ENCODE measurements at regions of chr14 and their contacts with region 1.

Region 1: GRCh38 chr14:87745507-87746118 is 247.4 kb downstream of the GALC start:
- DNase-seq: no peak
- H3K4me3 Mint-ChIP-seq: no peak overlapping the region
- H3K27ac Mint-ChIP-seq: no peak overlapping the region
- H3K4me1 Mint-ChIP-seq: no peaks in the 10 kb centered on the region
- H3K27me3 Mint-ChIP-seq: peaks cover 2% of the 10 kb centered on the region

Region 2: DNA sequence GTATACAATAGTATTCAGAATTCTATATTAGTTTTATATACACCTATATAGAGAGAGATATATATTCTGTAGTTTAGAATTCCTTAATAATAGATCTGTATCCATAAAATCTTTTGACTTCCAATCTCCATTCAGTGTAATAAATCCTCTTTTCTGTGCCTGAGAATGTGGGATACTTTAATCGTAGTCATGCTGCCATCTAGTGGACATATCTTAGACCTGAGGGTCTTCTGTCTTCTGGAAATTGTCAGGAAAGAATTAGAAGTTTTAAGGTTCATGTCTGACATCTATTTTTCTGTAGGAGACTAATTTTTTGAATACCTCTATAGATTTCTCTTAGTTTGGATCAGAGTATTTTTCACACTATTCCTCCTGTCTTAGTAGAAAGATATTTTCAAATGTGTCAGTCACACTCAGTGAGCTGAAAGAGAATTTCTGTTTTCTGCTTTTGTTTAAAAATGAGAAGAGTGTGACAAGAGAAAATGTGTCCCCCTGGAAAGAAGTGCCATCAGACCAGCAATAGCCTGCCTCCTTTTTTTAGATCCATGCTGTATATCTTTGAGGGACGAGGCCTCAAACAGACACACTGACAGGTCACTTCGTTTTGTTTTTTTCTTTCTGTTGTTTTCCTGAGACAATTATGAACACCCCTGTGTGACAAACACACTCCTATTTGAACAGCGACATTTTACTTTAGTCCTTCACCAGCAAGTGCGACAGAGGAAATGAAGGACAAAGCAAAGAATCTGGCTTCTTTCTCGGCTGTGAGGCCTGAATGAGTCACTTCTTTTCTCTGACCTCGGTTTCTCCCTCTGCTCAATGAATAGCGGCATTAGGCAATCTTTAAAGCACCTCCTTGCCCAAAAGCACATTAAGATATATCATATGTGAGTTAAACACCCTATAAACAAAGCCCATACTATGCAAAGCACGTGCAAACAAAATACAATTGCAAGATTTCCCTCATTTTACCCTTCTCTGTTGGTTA is 151.1 kb after region 1 on chr14:
- intact Hi-C with region 1: loop called (anchors 1 kb)
- DNase-seq: no peak
- H3K4me3 Mint-ChIP-seq: no peak overlapping the region
- H3K27ac Mint-ChIP-seq: no peak overlapping the region
- H3K4me1 Mint-ChIP-seq: no peaks in the 10 kb centered on the region
- H3K27me3 Mint-ChIP-seq: peaks cover 2% of the 10 kb centered on the region